Heart right ventricle (tissue), 16 donors: ENCODE measurements at regions of chr11 and their contacts with region 1.

Region 1: GRCh38 chr11:106249617-106250239 is 172.3 kb downstream of the AASDHPPT start:
- DNase-seq: no peak
- ATAC-seq: peak in 6 of 8 donors; percentile 24 to 61 (median 50)
- H3K4me3 ChIP-seq: no peak overlapping the region
- H3K27ac ChIP-seq: no peak overlapping the region
- H3K4me1 ChIP-seq: no peaks in the 10 kb centered on the region
- H3K27me3 ChIP-seq: no peaks in the 10 kb centered on the region
- CTCF ChIP-seq: no peak

Region 2: GRCh38 chr11:106466521-106467080 is 216.9 kb after region 1 on chr11:
- intact Hi-C with region 1: loop called in 1 of 10 experiments (anchors 10 kb)
- DNase-seq: no peak
- ATAC-seq: no peak
- H3K4me3 ChIP-seq: no peak overlapping the region
- H3K27ac ChIP-seq: no peak overlapping the region
- H3K4me1 ChIP-seq: peaks cover 0 to 16% (median 0%) of the 10 kb centered on the region in 9 donors
- H3K27me3 ChIP-seq: no peaks in the 10 kb centered on the region
- CTCF ChIP-seq: no peak

Region 3: DNA sequence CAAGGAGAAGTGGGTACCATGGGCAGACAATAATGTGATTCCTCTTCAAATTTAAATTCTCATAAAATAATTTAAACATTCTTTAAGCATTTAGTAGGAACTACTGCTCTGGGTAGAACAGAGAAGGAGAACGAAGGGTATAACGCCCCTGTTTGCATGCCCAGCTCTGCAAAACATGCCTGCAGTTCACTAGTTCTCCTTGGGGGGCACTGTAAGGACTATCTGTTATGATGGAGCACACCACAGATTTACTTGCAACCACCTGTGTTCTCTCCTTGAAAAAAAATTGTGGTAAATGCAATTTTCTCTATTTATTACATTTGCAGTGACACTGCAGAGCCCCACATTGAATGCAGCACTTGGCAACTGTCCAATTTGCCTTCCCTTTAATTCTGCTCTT is 668.2 kb after region 1 on chr11:
- intact Hi-C with region 1: no loop called
- DNase-seq: no peak
- ATAC-seq: no peak
- H3K4me3 ChIP-seq: no peak overlapping the region
- H3K27ac ChIP-seq: no peak overlapping the region
- H3K4me1 ChIP-seq: no peaks in the 10 kb centered on the region
- H3K27me3 ChIP-seq: no peaks in the 10 kb centered on the region
- CTCF ChIP-seq: peak in 5 of 9 donors; percentile 9 to 31 (median 22)